ENCODE measurements at regions of chr3 and their contacts with region 1.

Region 1: DNA sequence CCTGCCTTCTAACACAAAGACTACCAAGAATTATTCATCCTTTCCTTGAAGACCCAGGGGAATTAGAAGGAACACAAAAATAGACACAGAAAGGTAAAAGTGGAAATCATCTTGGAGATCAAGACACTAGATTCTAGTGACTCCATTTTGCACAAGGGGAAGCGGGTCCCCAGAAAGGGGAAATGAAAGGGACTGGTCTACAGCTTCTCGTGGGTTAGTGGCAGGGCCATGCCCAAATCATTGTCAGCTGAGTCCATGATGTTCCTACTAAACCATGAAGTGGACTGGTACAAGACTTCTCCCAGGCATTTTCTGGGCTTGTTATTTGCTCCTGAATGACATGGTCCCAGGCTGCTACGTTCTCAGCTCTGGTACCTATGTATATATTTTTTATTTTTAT is 230.7 kb upstream of the TPRG1 start:
- DNase-seq: peak in 1 of 2 donors; percentile 70
- ATAC-seq: no peak
- H3K4me3 ChIP-seq: no peak overlapping the region
- H3K27ac ChIP-seq: peak overlapping the region in 1 of 2 donors; percentile 72
- H3K4me1 ChIP-seq: peaks cover 6 to 9% of the 10 kb centered on the region in 2 donors
- H3K27me3 ChIP-seq: no peaks in the 10 kb centered on the region

Region 2: GRCh38 chr3:188900421-188900951 is 40.6 kb before region 1 on chr3:
- intact Hi-C with region 1: loop called in 1 of 2 experiments (anchors 5 kb)
- DNase-seq: no peak
- ATAC-seq: peak; percentile 77
- H3K4me3 ChIP-seq: no peak overlapping the region
- H3K27ac ChIP-seq: peak overlapping the region in 1 of 2 donors; percentile 63
- H3K4me1 ChIP-seq: no peaks in the 10 kb centered on the region
- H3K27me3 ChIP-seq: no peaks in the 10 kb centered on the region

Measured in aorta (tissue), 5 donors.